MCF 10A (cell line): ENCODE measurements at regions of chr1 and their contacts with region 1.

Region 1: GRCh38 chr1:156096640-156097391 is 14.6 kb upstream of the MEX3A start:
- DNase-seq: peak; percentile 89
- H3K4me3 Mint-ChIP-seq: no peak overlapping the region
- H3K27ac Mint-ChIP-seq: peak overlapping the region; percentile 82
- H3K4me1 Mint-ChIP-seq: peaks cover 35% of the 10 kb centered on the region
- H3K27me3 Mint-ChIP-seq: no peaks in the 10 kb centered on the region
- CTCF ChIP-seq: peak; percentile 99

Region 2: GRCh38 chr1:155884031-155884960 is 212.5 kb before region 1 on chr1:
- CTCF ChIA-PET with region 1: no interaction called
- POLR2A ChIA-PET with region 1: no interaction called
- intact Hi-C with region 1: no loop called
- DNase-seq: no peak
- H3K4me3 Mint-ChIP-seq: no peak overlapping the region
- H3K27ac Mint-ChIP-seq: no peak overlapping the region
- H3K4me1 Mint-ChIP-seq: no peaks in the 10 kb centered on the region
- H3K27me3 Mint-ChIP-seq: peaks cover 19% of the 10 kb centered on the region
- CTCF ChIP-seq: no peak

Region 3: GRCh38 chr1:156114101-156114916 is 17.5 kb after region 1 on chr1 and contains the start of gene LMNA:
- CTCF ChIA-PET with region 1: interaction called, 1,892 read pairs
- POLR2A ChIA-PET with region 1: interaction called, 960 read pairs
- intact Hi-C with region 1: no loop called
- DNase-seq: peak; percentile 100
- H3K4me3 Mint-ChIP-seq: peak within 1 kb of the TSS; percentile 79
- H3K27ac Mint-ChIP-seq: peak within 1 kb of the TSS; percentile 97
- H3K4me1 Mint-ChIP-seq: peaks cover 46% of the 10 kb centered on the region
- H3K27me3 Mint-ChIP-seq: no peaks in the 10 kb centered on the region
- CTCF ChIP-seq: no peak
- total RNA-seq, gene LMNA: 620 and 716 TPM in 2 replicates

Region 4: DNA sequence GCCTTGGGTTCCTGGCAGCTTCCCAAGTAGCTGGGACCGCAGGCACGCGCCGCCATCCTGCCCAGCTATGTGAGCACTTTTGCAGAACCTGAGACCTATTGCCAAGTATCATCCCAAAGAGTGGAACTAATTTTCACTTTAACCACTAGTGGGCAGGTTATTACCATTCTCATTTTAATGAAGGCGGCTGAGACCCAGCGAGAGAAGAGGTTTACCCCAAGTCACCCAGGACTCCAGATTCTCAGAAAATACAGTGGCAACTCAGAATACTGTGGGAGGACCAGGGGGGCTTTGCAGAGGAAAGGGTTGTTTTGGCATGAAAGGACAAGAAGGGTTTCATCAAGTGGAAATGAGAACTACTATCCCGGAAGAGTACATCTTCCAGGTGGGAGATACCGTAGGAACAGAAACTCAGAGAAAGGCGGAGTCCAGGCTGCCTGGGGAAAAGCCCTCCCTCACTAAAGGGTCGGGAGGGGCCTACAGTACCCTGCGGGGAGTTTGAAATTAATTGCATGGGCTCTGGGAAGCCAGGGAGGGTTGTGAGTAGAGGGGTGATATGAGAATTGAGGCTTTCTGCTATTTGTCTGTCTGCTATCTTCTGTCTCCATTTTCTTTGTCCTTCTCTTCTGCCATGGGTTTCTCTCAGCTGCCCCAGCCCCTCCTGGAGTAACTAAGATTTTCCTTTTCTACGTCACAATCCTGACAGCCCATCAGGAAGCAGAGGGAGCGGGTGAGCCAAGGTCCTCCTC is 49.4 kb after region 1 on chr1:
- CTCF ChIA-PET with region 1: interaction called, 1,892 read pairs
- POLR2A ChIA-PET with region 1: interaction called, 6 read pairs
- intact Hi-C with region 1: loop called (anchors 1 kb)
- DNase-seq: peak; percentile 97
- H3K4me3 Mint-ChIP-seq: peak overlapping the region; percentile 24
- H3K27ac Mint-ChIP-seq: no peak overlapping the region
- H3K4me1 Mint-ChIP-seq: peaks cover 29% of the 10 kb centered on the region
- H3K27me3 Mint-ChIP-seq: no peaks in the 10 kb centered on the region
- CTCF ChIP-seq: peak; percentile 60

Region 5: GRCh38 chr1:156172696-156173470 is 76.1 kb after region 1 on chr1:
- CTCF ChIA-PET with region 1: interaction called, 12 read pairs
- POLR2A ChIA-PET with region 1: no interaction called
- intact Hi-C with region 1: no loop called
- DNase-seq: no peak
- H3K4me3 Mint-ChIP-seq: no peak overlapping the region
- H3K27ac Mint-ChIP-seq: no peak overlapping the region
- H3K4me1 Mint-ChIP-seq: no peaks in the 10 kb centered on the region
- H3K27me3 Mint-ChIP-seq: peaks cover 30% of the 10 kb centered on the region
- CTCF ChIP-seq: no peak

Region 6: GRCh38 chr1:156193488-156194299 is 96.9 kb after region 1 on chr1 and contains the start of gene SLC25A44:
- CTCF ChIA-PET with region 1: interaction called, 11 read pairs
- POLR2A ChIA-PET with region 1: interaction called, 5 read pairs
- intact Hi-C with region 1: no loop called
- DNase-seq: peak; percentile 100
- H3K4me3 Mint-ChIP-seq: peak within 1 kb of the TSS; percentile 96
- H3K27ac Mint-ChIP-seq: peak within 1 kb of the TSS; percentile 90
- H3K4me1 Mint-ChIP-seq: peaks cover 16% of the 10 kb centered on the region
- H3K27me3 Mint-ChIP-seq: no peaks in the 10 kb centered on the region
- CTCF ChIP-seq: peak; percentile 49
- total RNA-seq, gene SLC25A44: 28.7 and 32.3 TPM in 2 replicates

Region 7: DNA sequence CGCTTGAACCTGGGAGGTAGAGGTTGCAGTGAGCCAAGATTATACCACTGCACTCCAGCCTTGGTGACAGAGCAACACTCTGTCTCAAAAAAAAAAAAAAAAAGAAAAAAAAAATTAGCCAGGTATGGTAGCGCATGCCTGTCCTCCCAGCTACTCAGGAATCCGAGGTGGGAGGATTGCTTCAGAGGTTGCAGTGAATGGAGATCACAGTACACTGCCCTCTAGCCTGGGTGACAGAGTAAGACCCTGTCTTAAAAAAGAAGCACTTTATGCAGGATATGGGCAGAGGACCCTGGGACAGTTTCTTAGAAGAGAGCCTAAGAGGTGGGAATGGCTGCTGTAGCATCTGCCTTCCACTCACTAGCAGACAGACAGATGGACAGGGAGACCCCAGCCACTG is 452.6 kb after region 1 on chr1:
- CTCF ChIA-PET with region 1: no interaction called
- POLR2A ChIA-PET with region 1: no interaction called
- intact Hi-C with region 1: no loop called
- DNase-seq: no peak
- H3K4me3 Mint-ChIP-seq: no peak overlapping the region
- H3K27ac Mint-ChIP-seq: no peak overlapping the region
- H3K4me1 Mint-ChIP-seq: peaks cover 17% of the 10 kb centered on the region
- H3K27me3 Mint-ChIP-seq: no peaks in the 10 kb centered on the region
- CTCF ChIP-seq: no peak